OCI-LY7 (cell line): ENCODE measurements at regions of chr1 and their contacts with region 1.

Region 1: DNA sequence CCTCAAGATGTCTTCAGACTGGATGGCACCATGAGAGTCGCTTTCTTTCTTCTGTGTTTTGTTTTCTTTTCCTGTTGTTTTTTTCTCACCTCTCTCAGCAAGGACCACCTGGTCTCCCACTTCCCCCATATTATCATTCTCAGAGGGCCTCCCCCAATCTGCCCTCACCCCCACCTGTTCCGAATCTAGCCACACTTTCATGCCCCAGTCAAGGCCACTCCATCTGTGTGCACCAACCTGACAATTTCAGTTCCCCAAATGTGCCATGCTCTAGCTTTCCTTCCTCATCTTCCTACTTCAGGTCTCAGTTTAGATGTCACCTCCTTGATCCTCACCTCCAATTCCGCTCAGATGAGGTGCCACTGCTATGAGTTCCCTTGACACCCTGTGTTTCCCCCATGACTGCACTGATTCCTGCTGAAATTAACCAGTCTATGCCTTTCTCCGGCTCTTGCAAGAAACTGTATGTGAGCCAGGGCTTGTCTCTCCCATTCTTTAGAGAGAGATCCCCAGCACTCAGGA is 146.2 kb downstream of the PLPP3 start:
- DNase-seq: peak; percentile 72
- H3K4me3 ChIP-seq: no peak overlapping the region
- H3K27ac ChIP-seq: peak overlapping the region; percentile 45
- H3K4me1 ChIP-seq: peaks cover 41% of the 10 kb centered on the region
- CTCF ChIP-seq: 0 out of 2 replicates have a peak, but pooled peaks have one; percentile 3

Region 2: DNA sequence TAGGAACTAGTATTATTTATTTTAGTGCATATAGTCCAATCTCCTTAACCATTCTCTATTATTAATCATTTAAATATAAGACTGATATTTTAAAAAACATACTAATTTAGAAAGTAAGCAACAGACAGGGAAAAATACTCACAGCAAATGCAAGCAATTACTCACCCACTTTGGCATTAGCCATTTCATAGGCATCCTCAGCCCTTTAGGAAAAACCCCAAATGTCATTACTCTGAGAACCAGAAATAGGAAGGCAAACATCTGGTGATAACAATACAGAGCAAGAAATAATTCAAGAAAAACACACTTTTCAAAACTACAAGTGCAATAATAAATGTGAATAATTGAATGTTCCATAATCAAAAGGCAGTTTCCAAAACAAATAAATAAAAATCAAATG is 398.9 kb before region 1 on chr1:
- CTCF ChIA-PET with region 1: no interaction called
- POLR2A ChIA-PET with region 1: no interaction called
- intact Hi-C with region 1: no loop called
- DNase-seq: no peak
- H3K4me3 ChIP-seq: no peak overlapping the region
- H3K27ac ChIP-seq: no peak overlapping the region
- H3K4me1 ChIP-seq: no peaks in the 10 kb centered on the region
- CTCF ChIP-seq: no peak

Region 3: DNA sequence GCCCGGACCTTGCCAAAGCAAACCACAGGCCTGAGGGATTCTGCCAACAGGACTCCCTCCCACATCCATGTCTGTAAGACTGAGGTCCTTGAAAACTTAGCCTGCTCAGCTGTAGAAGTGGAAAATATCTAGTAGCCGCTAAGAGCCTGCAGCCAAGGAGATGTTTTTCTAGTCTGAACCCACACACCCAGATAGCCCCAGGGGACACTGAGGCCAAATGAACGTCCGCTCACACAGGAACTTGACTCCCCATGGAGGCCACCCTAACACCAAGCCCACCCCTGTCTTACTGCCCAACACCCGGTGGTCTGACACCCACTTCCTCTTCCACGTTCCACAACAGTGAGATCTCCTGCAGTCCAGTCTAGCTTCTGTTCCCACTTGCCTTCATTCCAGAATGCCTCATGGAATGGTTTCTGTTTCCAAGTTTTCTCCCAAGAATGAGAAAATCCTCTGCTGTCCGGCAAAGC is 28.5 kb before region 1 on chr1:
- CTCF ChIA-PET with region 1: no interaction called
- POLR2A ChIA-PET with region 1: no interaction called
- intact Hi-C with region 1: no loop called
- DNase-seq: no peak
- H3K4me3 ChIP-seq: no peak overlapping the region
- H3K27ac ChIP-seq: no peak overlapping the region
- H3K4me1 ChIP-seq: peaks cover 12% of the 10 kb centered on the region
- CTCF ChIP-seq: no peak

Region 4: GRCh38 chr1:56525489-56526041 is 92.4 kb after region 1 on chr1:
- CTCF ChIA-PET with region 1: no interaction called
- POLR2A ChIA-PET with region 1: interaction called, 3 read pairs
- intact Hi-C with region 1: loop called (anchors 1 kb)
- DNase-seq: peak; percentile 81
- H3K4me3 ChIP-seq: peak overlapping the region; percentile 54
- H3K27ac ChIP-seq: peak overlapping the region; percentile 92
- H3K4me1 ChIP-seq: peaks cover 85% of the 10 kb centered on the region
- CTCF ChIP-seq: no peak